Gastrocnemius medialis (tissue), 4 donors: ENCODE measurements at regions of chr5 and their contacts with region 1.

Region 1: GRCh38 chr5:131165119-131165727 is at the start of gene HINT1:
- DNase-seq: peak; percentile 83 to 89
- ATAC-seq: peak; percentile 86
- H3K4me3 ChIP-seq: peak within 1 kb of the TSS; percentile 68 to 88 (median 72)
- H3K27ac ChIP-seq: peak within 1 kb of the TSS; percentile 91 to 98 (median 94)
- H3K4me1 ChIP-seq: peaks cover 15 to 19% of the 10 kb centered on the region in 2 donors
- H3K27me3 ChIP-seq: no peaks in the 10 kb centered on the region
- CTCF ChIP-seq: no peak
- POLR2A ChIP-seq: peak; percentile 82
- total RNA-seq, gene HINT1: 177 to 325 (median 232) TPM

Region 2: DNA sequence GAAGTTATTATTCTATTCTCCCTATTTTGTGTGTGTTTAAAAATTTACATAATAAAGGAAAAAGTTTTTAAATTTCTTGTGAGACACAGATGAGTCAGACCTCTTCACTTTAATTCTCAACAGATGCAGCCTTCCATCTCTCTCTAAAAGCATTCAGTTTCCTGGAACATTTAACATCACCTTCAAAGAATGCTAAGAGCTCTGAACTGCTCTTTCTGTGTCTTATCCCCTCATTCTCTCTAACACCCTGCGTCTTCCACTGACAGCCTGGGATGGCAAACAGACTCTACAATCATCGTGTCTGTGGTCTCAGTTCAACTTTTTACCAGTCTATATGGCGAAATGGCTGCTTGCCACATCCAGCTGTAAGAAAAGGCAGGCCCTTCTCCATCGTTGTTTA is 173.1 kb before region 1 on chr5:
- in situ Hi-C with region 1: no loop called
- intact Hi-C with region 1: no loop called
- DNase-seq: no peak
- ATAC-seq: no peak
- H3K4me3 ChIP-seq: no peak overlapping the region
- H3K27ac ChIP-seq: no peak overlapping the region
- H3K4me1 ChIP-seq: no peaks in the 10 kb centered on the region
- H3K27me3 ChIP-seq: no peaks in the 10 kb centered on the region
- CTCF ChIP-seq: no peak
- POLR2A ChIP-seq: no peak

Region 3: GRCh38 chr5:131252824-131253171 is 87.6 kb after region 1 on chr5:
- in situ Hi-C with region 1: loop called in 1 of 4 experiments (anchors 10 kb)
- intact Hi-C with region 1: no loop called
- DNase-seq: peak; percentile 29 to 53
- ATAC-seq: peak; percentile 26 to 30
- H3K4me3 ChIP-seq: no peak overlapping the region
- H3K27ac ChIP-seq: no peak overlapping the region
- H3K4me1 ChIP-seq: no peaks in the 10 kb centered on the region
- H3K27me3 ChIP-seq: no peaks in the 10 kb centered on the region
- CTCF ChIP-seq: no peak
- POLR2A ChIP-seq: no peak

Region 4: GRCh38 chr5:131263648-131264450 is 98.6 kb after region 1 on chr5 and contains the start of gene CDC42SE2:
- in situ Hi-C with region 1: loop called in 3 of 4 experiments (anchors 5 to 10 kb)
- intact Hi-C with region 1: loop called (anchors 1 kb)
- DNase-seq: peak; percentile 74 to 78
- ATAC-seq: peak; percentile 83 to 86
- H3K4me3 ChIP-seq: peak within 1 kb of the TSS; percentile 95 to 100 (median 98)
- H3K27ac ChIP-seq: peak within 1 kb of the TSS; percentile 87 to 96 (median 94)
- H3K4me1 ChIP-seq: peaks cover 33 to 44% of the 10 kb centered on the region in 2 donors
- H3K27me3 ChIP-seq: no peaks in the 10 kb centered on the region
- CTCF ChIP-seq: peak in 1 of 5 experiments; percentile 11
- POLR2A ChIP-seq: peak; percentile 92 to 97
- total RNA-seq, gene CDC42SE2: 23.9 to 29.6 (median 26.4) TPM

Region 5: GRCh38 chr5:131417240-131417869 is 252.1 kb after region 1 on chr5:
- in situ Hi-C with region 1: loop called (anchors 10 to 25 kb)
- intact Hi-C with region 1: loop called (anchors 1 kb)
- DNase-seq: peak; percentile 37 to 58
- ATAC-seq: peak in 1 of 2 donors; percentile 71
- H3K4me3 ChIP-seq: no peak overlapping the region
- H3K27ac ChIP-seq: no peak overlapping the region
- H3K4me1 ChIP-seq: no peaks in the 10 kb centered on the region
- H3K27me3 ChIP-seq: no peaks in the 10 kb centered on the region
- CTCF ChIP-seq: peak; percentile 58 to 84 (median 65)
- POLR2A ChIP-seq: no peak

Region 6: GRCh38 chr5:131758520-131758900 is 593.3 kb after region 1 on chr5:
- in situ Hi-C with region 1: loop called in 1 of 4 experiments (anchors 25 kb)
- intact Hi-C with region 1: no loop called
- DNase-seq: no peak
- ATAC-seq: peak; percentile 84 to 92
- H3K4me3 ChIP-seq: peak overlapping the region in 3 of 4 donors; percentile 14 to 30 (median 17)
- H3K27ac ChIP-seq: peak overlapping the region; percentile 79 to 88 (median 81)
- H3K4me1 ChIP-seq: peaks cover 65 to 69% of the 10 kb centered on the region in 2 donors
- H3K27me3 ChIP-seq: no peaks in the 10 kb centered on the region
- CTCF ChIP-seq: no peak
- POLR2A ChIP-seq: no peak

Region 7: DNA sequence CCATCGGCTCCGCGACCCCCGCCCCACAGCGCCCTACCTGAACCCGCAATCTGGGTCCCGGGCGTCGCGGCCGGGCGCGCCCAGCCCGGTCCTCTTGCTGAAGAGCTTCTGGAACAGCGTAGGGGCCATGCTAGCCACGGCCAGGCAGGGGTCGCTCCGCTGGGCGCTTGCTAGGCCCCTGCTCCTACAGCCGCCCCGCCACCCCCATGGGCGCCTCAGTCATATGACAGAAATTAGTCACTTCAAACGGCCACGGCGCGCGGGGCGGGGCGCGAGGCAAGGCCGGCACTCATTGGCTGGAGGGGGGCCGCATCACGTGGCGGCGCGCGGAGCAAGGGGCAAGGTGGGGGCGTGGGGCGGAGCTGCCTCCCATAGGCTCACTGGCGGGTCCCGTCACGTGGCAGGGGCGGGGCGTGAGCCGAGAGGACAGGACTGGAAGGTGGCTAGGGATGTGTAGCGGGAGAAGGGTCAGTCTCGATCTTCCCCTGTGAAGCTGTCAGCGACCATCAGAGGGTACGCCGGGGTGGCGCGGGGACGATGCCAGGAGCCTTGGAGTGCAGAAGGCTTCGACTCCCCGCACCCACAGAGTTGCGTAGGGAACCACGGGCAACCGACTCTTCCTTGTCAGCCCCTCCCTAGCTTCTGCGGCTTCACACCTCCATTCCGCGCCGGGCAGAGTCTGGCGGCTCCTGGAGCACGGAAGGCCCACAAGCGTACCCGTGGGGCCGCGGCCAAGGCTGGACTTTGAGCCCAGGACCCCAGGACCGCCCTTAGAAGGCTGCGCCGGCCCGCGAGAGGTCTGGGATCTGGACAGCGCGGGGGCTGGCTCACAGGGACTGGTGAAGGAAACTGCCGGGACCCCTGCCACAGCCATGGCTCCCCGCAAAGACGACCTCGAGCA is 631.8 kb after region 1 on chr5 and contains the start of gene FNIP1:
- in situ Hi-C with region 1: no loop called
- intact Hi-C with region 1: loop called (anchors 2 kb)
- DNase-seq: peak; percentile 100
- ATAC-seq: peak; percentile 83 to 85
- H3K4me3 ChIP-seq: peak within 1 kb of the TSS; percentile 84 to 93 (median 90)
- H3K27ac ChIP-seq: peak within 1 kb of the TSS; percentile 99
- H3K4me1 ChIP-seq: peaks cover 39 to 45% of the 10 kb centered on the region in 2 donors
- H3K27me3 ChIP-seq: no peaks in the 10 kb centered on the region
- CTCF ChIP-seq: peak in 2 of 5 experiments; percentile 2 to 27
- POLR2A ChIP-seq: peak; percentile 100
- total RNA-seq, gene FNIP1: 53.9 to 84.7 (median 66.9) TPM